ENCODE measurements at regions of chr22 and their contacts with region 1.

Region 1: GRCh38 chr22:41666661-41667258 is 21.9 kb downstream of the SNU13 start:
- DNase-seq: peak; percentile 85 to 96 (median 92)
- ATAC-seq: peak; percentile 91 to 96 (median 94)
- H3K4me3 ChIP-seq: peak overlapping the region; percentile 48 to 49
- H3K4me3 Mint-ChIP-seq: peak overlapping the region; percentile 69 to 85 (median 74)
- H3K27ac ChIP-seq: peak overlapping the region; percentile 90
- H3K27ac Mint-ChIP-seq: peak overlapping the region; percentile 94 to 98
- H3K4me1 ChIP-seq: peaks cover 0 to 20% of the 10 kb centered on the region in 2 experiments
- H3K4me1 Mint-ChIP-seq: peaks cover 12 to 19% (median 13%) of the 10 kb centered on the region in 3 donors
- H3K27me3 ChIP-seq: no peaks in the 10 kb centered on the region
- H3K27me3 Mint-ChIP-seq: no peaks in the 10 kb centered on the region

Region 2: DNA sequence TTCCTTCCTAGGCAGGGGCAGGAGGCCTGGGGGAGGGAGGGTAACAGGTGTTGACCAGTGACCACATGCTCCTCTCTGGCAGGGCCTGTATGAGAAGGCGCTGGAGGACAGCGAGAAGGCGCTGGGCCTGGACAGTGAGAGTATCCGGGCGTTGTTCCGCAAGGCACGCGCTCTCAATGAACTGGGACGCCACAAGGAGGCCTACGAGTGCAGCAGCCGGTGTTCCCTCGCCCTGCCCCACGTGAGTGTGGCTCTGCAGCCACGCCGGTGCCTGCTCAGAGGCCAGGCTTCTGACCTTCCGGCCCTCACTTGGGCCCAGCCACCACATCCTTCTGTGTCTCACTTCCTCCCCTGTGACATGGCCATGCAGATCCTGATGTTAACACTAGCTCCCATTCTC is 339.6 kb before region 1 on chr22:
- CTCF ChIA-PET with region 1: no interaction called
- POLR2A ChIA-PET with region 1: no interaction called
- DNase-seq: no peak
- ATAC-seq: no peak
- H3K4me3 ChIP-seq: no peak overlapping the region
- H3K4me3 Mint-ChIP-seq: no peak overlapping the region
- H3K27ac ChIP-seq: no peak overlapping the region
- H3K27ac Mint-ChIP-seq: no peak overlapping the region
- H3K4me1 ChIP-seq: no peaks in the 10 kb centered on the region
- H3K4me1 Mint-ChIP-seq: peaks cover 0 to 7% (median 0%) of the 10 kb centered on the region in 3 donors
- H3K27me3 ChIP-seq: no peaks in the 10 kb centered on the region
- H3K27me3 Mint-ChIP-seq: no peaks in the 10 kb centered on the region

Region 3: DNA sequence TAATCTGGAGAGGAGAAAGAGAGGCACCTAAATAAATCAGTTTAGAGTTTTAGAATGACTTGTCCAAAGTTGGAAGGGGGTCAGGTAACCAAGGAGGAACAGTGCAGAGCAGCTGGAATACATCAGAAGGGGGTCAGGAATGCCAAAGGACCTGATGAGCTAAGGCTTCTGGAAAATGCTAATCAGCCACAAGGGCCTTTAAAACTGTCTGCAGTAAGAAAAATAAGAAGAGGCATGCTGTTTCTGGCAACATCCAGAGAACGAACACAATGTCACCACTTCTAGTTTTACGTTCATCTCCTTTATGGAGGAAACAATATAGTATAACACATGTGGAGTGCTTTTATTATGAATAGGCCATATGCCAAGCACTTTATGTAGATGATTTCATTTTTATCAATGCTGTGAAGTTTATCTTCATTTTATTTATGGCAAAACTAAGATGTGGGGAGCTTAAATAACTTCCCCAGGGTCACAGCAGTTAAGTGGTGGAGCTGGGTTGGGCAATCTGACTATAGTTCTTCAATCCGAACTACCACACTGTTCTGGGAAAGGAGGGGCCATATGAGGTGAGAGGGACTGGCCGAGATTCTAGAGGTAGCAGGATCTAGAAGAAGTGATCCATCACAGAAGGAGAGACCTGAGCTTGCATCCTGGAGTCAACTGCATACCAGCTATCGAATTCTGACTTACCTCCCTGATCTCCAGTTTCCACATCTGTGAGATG is 175.2 kb before region 1 on chr22:
- CTCF ChIA-PET with region 1: no interaction called
- POLR2A ChIA-PET with region 1: no interaction called
- DNase-seq: no peak
- ATAC-seq: no peak
- H3K4me3 ChIP-seq: no peak overlapping the region
- H3K4me3 Mint-ChIP-seq: no peak overlapping the region
- H3K27ac ChIP-seq: no peak overlapping the region
- H3K27ac Mint-ChIP-seq: no peak overlapping the region
- H3K4me1 ChIP-seq: no peaks in the 10 kb centered on the region
- H3K4me1 Mint-ChIP-seq: peaks cover 33 to 34% (median 33%) of the 10 kb centered on the region in 3 donors
- H3K27me3 ChIP-seq: no peaks in the 10 kb centered on the region
- H3K27me3 Mint-ChIP-seq: no peaks in the 10 kb centered on the region

Region 4: DNA sequence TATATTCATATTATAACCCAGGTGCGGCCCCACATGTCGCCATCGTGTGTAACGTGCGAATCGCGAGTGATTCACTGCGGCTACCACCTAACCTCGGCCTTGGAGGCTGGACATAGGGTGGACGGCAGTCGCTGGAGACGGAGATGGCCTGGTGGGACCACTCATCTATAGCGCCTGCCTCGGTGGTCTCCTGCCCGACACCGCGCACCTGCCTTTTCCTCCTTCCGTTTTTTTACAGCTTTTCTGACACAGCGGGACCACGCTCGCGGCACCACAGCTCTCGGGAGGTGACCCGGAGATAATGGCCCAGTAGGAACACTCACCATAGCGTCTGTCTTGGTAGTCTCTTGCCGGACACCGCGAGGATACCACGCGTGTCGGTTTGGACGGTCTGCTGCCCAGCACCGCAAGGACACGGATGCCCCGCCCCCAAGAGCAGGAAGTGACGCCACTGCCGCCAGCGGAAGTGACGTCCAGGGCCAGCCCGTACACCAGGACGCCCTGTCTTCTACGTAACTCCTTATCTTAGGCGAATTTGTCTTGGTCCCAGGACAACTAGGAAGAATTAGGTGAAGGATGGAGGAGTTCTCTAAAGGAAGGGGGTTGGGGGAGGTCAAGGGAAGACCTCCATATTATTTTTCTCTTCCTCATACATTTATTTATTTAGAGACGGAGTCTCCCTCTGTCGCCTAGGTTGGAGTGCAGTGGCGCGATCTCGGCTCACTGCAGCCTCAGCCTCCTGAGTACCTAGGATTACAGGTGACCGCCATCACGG is 15.5 kb after region 1 on chr22:
- CTCF ChIA-PET with region 1: interaction called in 1 of 2 experiments, 12 read pairs
- POLR2A ChIA-PET with region 1: interaction called in 1 of 2 experiments, 3 read pairs
- DNase-seq: peak; percentile 59 to 90 (median 79)
- ATAC-seq: peak; percentile 90 to 94 (median 93)
- H3K4me3 ChIP-seq: peak overlapping the region; percentile 75 to 78
- H3K4me3 Mint-ChIP-seq: peak overlapping the region; percentile 89 to 96 (median 96)
- H3K27ac ChIP-seq: peak overlapping the region; percentile 82
- H3K27ac Mint-ChIP-seq: peak overlapping the region; percentile 86 to 91
- H3K4me1 ChIP-seq: peaks cover 2 to 28% of the 10 kb centered on the region in 2 experiments
- H3K4me1 Mint-ChIP-seq: peaks cover 44 to 51% (median 46%) of the 10 kb centered on the region in 3 donors
- H3K27me3 ChIP-seq: no peaks in the 10 kb centered on the region
- H3K27me3 Mint-ChIP-seq: no peaks in the 10 kb centered on the region

Region 5: DNA sequence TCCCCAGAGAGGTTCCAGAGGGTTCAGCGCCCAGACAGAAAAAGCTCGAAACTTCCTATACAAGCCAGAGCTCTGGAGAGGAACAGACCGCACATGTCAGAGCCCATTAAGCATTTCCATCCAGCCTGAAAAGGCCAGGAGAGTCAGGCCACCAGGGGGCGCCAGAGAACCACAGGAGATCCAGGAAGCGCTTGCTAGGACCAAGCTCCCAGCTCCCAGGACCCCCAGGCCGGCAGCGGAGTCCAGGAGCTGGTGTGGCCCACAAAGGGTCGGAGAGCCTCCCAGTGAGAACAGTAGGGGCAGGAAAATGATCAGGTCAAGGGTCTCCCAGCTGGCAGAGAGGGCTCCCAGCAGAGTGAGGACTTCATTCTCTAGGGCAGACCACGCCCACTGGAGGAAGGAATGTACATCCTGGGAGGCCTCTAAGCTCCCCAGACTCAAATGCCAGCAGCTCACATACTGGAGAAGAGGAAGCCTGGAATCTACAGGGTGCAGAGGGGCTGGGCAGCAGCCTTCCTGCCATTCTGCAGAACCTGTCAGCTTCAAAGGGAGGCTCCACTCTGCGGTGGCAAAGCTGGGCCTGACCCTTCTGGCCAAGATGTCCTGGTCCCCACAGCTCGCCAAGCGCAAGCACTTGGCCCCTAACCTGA is 30.5 kb after region 1 on chr22:
- CTCF ChIA-PET with region 1: interaction called, 5 to 21 read pairs
- POLR2A ChIA-PET with region 1: no interaction called
- DNase-seq: peak; percentile 59 to 95 (median 86)
- ATAC-seq: peak; percentile 67 to 76 (median 74)
- H3K4me3 ChIP-seq: peak overlapping the region; percentile 18 to 29
- H3K4me3 Mint-ChIP-seq: peak overlapping the region; percentile 23 to 70 (median 64)
- H3K27ac ChIP-seq: peak overlapping the region; percentile 35
- H3K27ac Mint-ChIP-seq: peak overlapping the region; percentile 77 to 80
- H3K4me1 ChIP-seq: peaks cover 2 to 19% of the 10 kb centered on the region in 2 experiments
- H3K4me1 Mint-ChIP-seq: peaks cover 11 to 14% (median 13%) of the 10 kb centered on the region in 3 donors
- H3K27me3 ChIP-seq: no peaks in the 10 kb centered on the region
- H3K27me3 Mint-ChIP-seq: peaks cover 0 to 1% of the 10 kb centered on the region in 2 donors

Region 6: GRCh38 chr22:41940832-41941765 is 274.3 kb after region 1 on chr22:
- CTCF ChIA-PET with region 1: interaction called in 1 of 2 experiments, 33 read pairs
- POLR2A ChIA-PET with region 1: interaction called in 1 of 2 experiments, 6 read pairs
- DNase-seq: peak; percentile 70 to 92 (median 83)
- ATAC-seq: peak; percentile 54 to 79 (median 70)
- H3K4me3 ChIP-seq: peak overlapping the region in 1 of 2 donors; percentile 14
- H3K4me3 Mint-ChIP-seq: peak overlapping the region; percentile 72 to 92 (median 88)
- H3K27ac ChIP-seq: peak overlapping the region; percentile 99
- H3K27ac Mint-ChIP-seq: peak overlapping the region; percentile 100
- H3K4me1 ChIP-seq: peaks cover 5 to 48% of the 10 kb centered on the region in 2 experiments
- H3K4me1 Mint-ChIP-seq: peaks cover 35 to 55% (median 47%) of the 10 kb centered on the region in 3 donors
- H3K27me3 ChIP-seq: no peaks in the 10 kb centered on the region
- H3K27me3 Mint-ChIP-seq: no peaks in the 10 kb centered on the region